ENCODE measurements at regions of chr17 and their contacts with region 1.

Region 1: DNA sequence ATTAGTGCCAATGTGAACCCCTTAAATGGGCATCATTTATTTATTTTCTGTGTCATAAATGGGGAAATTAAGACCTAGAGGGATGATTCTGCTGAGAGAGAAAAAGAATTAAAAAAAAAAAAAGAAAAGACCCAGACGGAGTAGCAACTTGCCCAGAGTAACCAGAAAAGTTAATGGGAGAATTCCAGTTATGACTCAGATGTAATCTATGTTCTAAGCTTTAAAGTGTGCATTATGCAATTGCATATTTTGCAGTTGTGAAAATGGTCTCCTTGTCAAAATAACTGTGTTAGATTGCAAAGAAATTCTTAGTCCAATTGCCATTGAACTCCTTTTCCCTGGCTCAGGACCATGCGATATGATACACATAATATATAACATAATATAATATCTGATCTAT is 38.6 kb upstream of the TBX2 start:
- DNase-seq: no peak
- H3K4me3 ChIP-seq: no peak overlapping the region
- H3K27ac ChIP-seq: no peak overlapping the region
- H3K4me1 ChIP-seq: peaks cover 0 to 9% of the 10 kb centered on the region in 2 experiments; a peak in 1 of 4 replicates
- H3K27me3 ChIP-seq: no peaks in the 10 kb centered on the region
- CTCF ChIP-seq: no peak
- EP300 ChIP-seq: no peak
- RAD21 ChIP-seq: no peak

Region 2: DNA sequence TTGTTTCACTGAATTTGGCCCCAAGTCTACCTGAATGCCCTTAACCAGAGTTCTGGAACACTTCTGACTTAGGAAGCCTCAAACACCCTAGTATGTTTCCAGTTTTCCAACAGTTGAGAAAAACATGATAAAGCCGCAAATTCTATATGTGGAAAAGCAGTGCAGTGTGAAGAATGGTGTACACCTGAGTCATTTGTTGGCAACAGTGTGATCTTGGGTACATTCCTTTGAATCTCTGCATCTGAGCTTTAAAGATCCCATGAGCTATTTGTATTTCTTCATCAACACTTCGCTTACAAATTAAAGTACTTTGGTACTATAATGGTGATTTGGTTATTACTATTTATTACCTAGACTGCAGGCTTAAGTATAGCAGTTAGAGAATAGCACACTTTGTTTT is 55.1 kb before region 1 on chr17:
- CTCF ChIA-PET with region 1: no interaction called
- POLR2A ChIA-PET with region 1: no interaction called
- DNase-seq: no peak
- H3K4me3 ChIP-seq: no peak overlapping the region
- H3K27ac ChIP-seq: no peak overlapping the region
- H3K4me1 ChIP-seq: peaks cover 19 to 36% of the 10 kb centered on the region in 2 experiments
- H3K27me3 ChIP-seq: no peaks in the 10 kb centered on the region
- CTCF ChIP-seq: no peak
- EP300 ChIP-seq: no peak
- RAD21 ChIP-seq: no peak

Region 3: DNA sequence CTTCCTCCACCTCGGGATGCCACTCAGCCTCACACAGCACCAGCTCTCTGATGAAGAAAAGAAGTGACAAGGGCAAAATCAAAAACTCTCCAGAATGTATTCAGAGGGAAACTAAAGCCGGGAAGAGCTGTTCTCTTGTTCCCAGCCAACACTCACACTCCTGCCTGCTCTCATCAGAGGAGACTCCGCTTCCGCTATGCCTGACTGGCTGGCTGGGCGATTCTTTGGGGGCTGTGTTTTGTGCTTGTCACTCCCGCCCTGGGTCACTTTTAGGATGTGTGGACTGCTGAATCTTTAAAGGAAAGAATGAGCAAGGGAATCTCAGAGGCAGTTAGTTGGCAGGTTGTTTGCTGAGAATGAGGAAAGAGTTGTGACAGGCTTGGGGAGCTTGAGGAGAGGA is 16.0 kb before region 1 on chr17:
- CTCF ChIA-PET with region 1: interaction called, 13 read pairs
- POLR2A ChIA-PET with region 1: no interaction called
- DNase-seq: no peak
- H3K4me3 ChIP-seq: no peak overlapping the region
- H3K27ac ChIP-seq: no peak overlapping the region
- H3K4me1 ChIP-seq: peaks cover 0 to 3% of the 10 kb centered on the region in 2 experiments; a peak in 1 of 4 replicates
- H3K27me3 ChIP-seq: no peaks in the 10 kb centered on the region
- CTCF ChIP-seq: no peak
- EP300 ChIP-seq: no peak
- RAD21 ChIP-seq: no peak